CD4-positive, alpha-beta memory T cell (primary cell): ENCODE measurements at regions of chr17 and their contacts with region 1.

Region 1: GRCh38 chr17:40317880-40318829 is 9.2 kb downstream of the RARA start:
- DNase-seq: peak; percentile 89 to 93 (median 91)
- H3K4me3 ChIP-seq: peak overlapping the region; percentile 80 to 91
- H3K4me3 Mint-ChIP-seq: peak overlapping the region; percentile 91 to 98 (median 96)
- H3K27ac ChIP-seq: peak overlapping the region; percentile 99
- H3K27ac Mint-ChIP-seq: peak overlapping the region; percentile 96 to 100 (median 99)
- H3K4me1 ChIP-seq: peaks cover 74% of the 10 kb centered on the region
- H3K4me1 Mint-ChIP-seq: peaks cover 42 to 95% (median 61%) of the 10 kb centered on the region in 4 donors
- H3K27me3 ChIP-seq: no peaks in the 10 kb centered on the region
- H3K27me3 Mint-ChIP-seq: peaks cover 1 to 3% of the 10 kb centered on the region in 2 donors

Region 2: GRCh38 chr17:40287494-40288369 is 30.4 kb before region 1 on chr17 and contains the start of gene CDC6:
- CTCF ChIA-PET with region 1: no interaction called
- POLR2A ChIA-PET with region 1: interaction called, 7 read pairs
- intact Hi-C with region 1: loop called (anchors 2 kb)
- DNase-seq: peak; percentile 97 to 100 (median 98)
- H3K4me3 ChIP-seq: peak within 1 kb of the TSS; percentile 80 to 89
- H3K4me3 Mint-ChIP-seq: peak within 1 kb of the TSS; percentile 97 to 100 (median 99)
- H3K27ac ChIP-seq: peak within 1 kb of the TSS; percentile 42
- H3K27ac Mint-ChIP-seq: peak within 1 kb of the TSS; percentile 82 to 98 (median 94)
- H3K4me1 ChIP-seq: peaks cover 26% of the 10 kb centered on the region
- H3K4me1 Mint-ChIP-seq: peaks cover 17 to 40% (median 27%) of the 10 kb centered on the region in 4 donors
- H3K27me3 ChIP-seq: no peaks in the 10 kb centered on the region
- H3K27me3 Mint-ChIP-seq: no peaks in the 10 kb centered on the region
- total RNA-seq, gene CDC6: 0.72 to 2.1 TPM

Region 3: GRCh38 chr17:40329839-40330794 is 12.0 kb after region 1 on chr17:
- CTCF ChIA-PET with region 1: interaction called, 42 read pairs
- POLR2A ChIA-PET with region 1: interaction called, 1,054 read pairs
- intact Hi-C with region 1: loop called (anchors 1 kb)
- DNase-seq: no peak
- H3K4me3 ChIP-seq: peak overlapping the region; percentile 30 to 38
- H3K4me3 Mint-ChIP-seq: peak overlapping the region in 7 of 8 donors; percentile 22 to 77 (median 60)
- H3K27ac ChIP-seq: peak overlapping the region; percentile 54
- H3K27ac Mint-ChIP-seq: peak overlapping the region; percentile 64 to 100 (median 91)
- H3K4me1 ChIP-seq: peaks cover 98% of the 10 kb centered on the region
- H3K4me1 Mint-ChIP-seq: peaks cover 64 to 98% (median 82%) of the 10 kb centered on the region in 4 donors
- H3K27me3 ChIP-seq: no peaks in the 10 kb centered on the region
- H3K27me3 Mint-ChIP-seq: no peaks in the 10 kb centered on the region

Region 4: DNA sequence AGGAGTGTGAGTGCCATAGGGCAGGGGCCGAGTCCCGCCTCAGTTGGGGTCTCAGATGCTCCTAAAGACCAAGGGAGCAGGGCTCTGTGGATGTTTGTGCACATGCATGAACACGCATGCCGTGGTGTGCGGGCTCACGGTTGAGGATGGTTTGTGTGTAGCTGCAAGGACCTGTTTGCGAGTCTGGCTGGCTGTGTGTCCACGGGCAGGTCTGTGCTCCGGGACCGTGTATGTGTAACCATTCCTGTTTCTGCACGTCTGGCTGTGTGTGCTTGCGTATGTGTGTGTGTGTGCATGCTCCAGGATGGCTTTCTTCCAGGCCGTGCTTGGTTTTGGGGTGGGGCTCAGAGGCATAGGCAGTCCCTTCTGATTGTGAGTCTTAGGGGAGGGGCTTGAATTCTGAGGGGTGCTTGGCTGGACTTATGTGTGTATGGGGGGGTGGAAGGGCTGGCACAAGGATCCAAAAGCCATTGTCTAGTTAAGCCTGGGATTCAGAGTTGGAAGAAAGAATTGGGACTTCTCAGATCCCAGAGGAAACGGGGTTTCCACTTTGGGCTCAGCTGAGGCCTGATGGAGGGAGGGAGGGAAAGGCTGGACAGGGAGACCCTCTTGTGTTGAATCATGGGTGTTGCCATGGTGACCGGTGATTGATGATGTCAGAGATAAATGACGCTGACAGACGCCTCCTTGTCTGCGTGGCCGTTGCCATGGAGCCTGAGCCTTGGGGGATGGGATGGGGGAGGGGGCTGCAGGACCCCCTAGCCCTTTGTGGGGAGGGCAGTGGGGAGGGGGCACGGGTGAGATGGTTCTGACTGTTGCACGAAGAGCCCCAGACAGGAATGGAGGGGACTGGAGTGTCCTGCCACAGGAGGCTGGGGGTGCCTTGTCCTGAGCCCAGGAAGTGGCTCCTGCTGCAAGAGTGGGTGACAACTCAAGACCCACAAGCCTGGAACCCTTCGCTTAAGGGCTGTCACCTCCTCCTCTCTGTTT is 32.1 kb after region 1 on chr17:
- CTCF ChIA-PET with region 1: interaction called, 573 read pairs
- POLR2A ChIA-PET with region 1: interaction called, 1,054 read pairs
- intact Hi-C with region 1: no loop called
- DNase-seq: no peak
- H3K4me3 ChIP-seq: no peak overlapping the region
- H3K4me3 Mint-ChIP-seq: no peak overlapping the region
- H3K27ac ChIP-seq: no peak overlapping the region
- H3K27ac Mint-ChIP-seq: peak overlapping the region in 5 of 7 donors; percentile 46 to 95 (median 87)
- H3K4me1 ChIP-seq: peaks cover 33% of the 10 kb centered on the region
- H3K4me1 Mint-ChIP-seq: peaks cover 20 to 68% (median 37%) of the 10 kb centered on the region in 4 donors
- H3K27me3 ChIP-seq: no peaks in the 10 kb centered on the region
- H3K27me3 Mint-ChIP-seq: no peaks in the 10 kb centered on the region

Region 5: GRCh38 chr17:40371261-40371929 is 53.2 kb after region 1 on chr17:
- CTCF ChIA-PET with region 1: no interaction called
- POLR2A ChIA-PET with region 1: no interaction called
- intact Hi-C with region 1: no loop called
- DNase-seq: peak; percentile 29 to 56 (median 46)
- H3K4me3 ChIP-seq: no peak overlapping the region
- H3K4me3 Mint-ChIP-seq: peak overlapping the region in 1 of 8 donors; percentile 52
- H3K27ac ChIP-seq: no peak overlapping the region
- H3K27ac Mint-ChIP-seq: peak overlapping the region in 3 of 7 donors; percentile 57 to 84 (median 72)
- H3K4me1 ChIP-seq: no peaks in the 10 kb centered on the region
- H3K4me1 Mint-ChIP-seq: peaks cover 2 to 8% (median 5%) of the 10 kb centered on the region in 4 donors
- H3K27me3 ChIP-seq: no peaks in the 10 kb centered on the region
- H3K27me3 Mint-ChIP-seq: peaks cover under 1% of the 10 kb centered on the region in 2 donors

Region 6: DNA sequence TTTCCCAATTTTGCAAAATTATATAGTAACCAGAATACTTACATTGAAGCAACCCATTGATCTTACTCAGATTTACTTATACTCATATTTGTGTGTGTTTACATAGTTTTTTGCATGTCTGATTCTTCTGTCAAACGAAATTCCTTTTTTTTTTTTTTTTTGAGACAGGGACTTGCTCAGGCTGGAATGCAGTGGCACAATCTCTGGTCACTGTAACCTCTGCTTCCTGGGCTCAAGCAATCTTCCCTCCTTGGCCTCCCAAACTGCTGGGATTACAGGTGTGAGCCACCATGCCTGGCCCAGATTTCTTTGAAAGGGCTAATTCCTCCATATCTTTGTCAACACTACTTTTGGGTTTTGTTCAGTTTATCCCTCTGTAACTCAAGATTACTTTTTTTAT is 69.5 kb after region 1 on chr17:
- CTCF ChIA-PET with region 1: no interaction called
- POLR2A ChIA-PET with region 1: no interaction called
- intact Hi-C with region 1: no loop called
- DNase-seq: no peak
- H3K4me3 ChIP-seq: no peak overlapping the region
- H3K4me3 Mint-ChIP-seq: no peak overlapping the region
- H3K27ac ChIP-seq: no peak overlapping the region
- H3K27ac Mint-ChIP-seq: no peak overlapping the region
- H3K4me1 ChIP-seq: no peaks in the 10 kb centered on the region
- H3K4me1 Mint-ChIP-seq: peaks cover 0 to 12% (median under 1%) of the 10 kb centered on the region in 4 donors
- H3K27me3 ChIP-seq: no peaks in the 10 kb centered on the region
- H3K27me3 Mint-ChIP-seq: no peaks in the 10 kb centered on the region

Region 7: GRCh38 chr17:40417609-40418427 is 99.7 kb after region 1 on chr17 and contains the start of gene TOP2A:
- CTCF ChIA-PET with region 1: no interaction called
- POLR2A ChIA-PET with region 1: interaction called, 14 read pairs
- intact Hi-C with region 1: no loop called
- DNase-seq: peak; percentile 98 to 99 (median 98)
- H3K4me3 ChIP-seq: peak within 1 kb of the TSS; percentile 77 to 91
- H3K4me3 Mint-ChIP-seq: peak within 1 kb of the TSS; percentile 90 to 97 (median 95)
- H3K27ac ChIP-seq: peak within 1 kb of the TSS; percentile 49
- H3K27ac Mint-ChIP-seq: peak within 1 kb of the TSS; percentile 69 to 97 (median 93)
- H3K4me1 ChIP-seq: peaks cover 37% of the 10 kb centered on the region
- H3K4me1 Mint-ChIP-seq: peaks cover 15 to 35% (median 28%) of the 10 kb centered on the region in 4 donors
- H3K27me3 ChIP-seq: no peaks in the 10 kb centered on the region
- H3K27me3 Mint-ChIP-seq: no peaks in the 10 kb centered on the region
- total RNA-seq, gene TOP2A: 0.47 to 1.1 TPM

Region 8: GRCh38 chr17:40615295-40615988 is 297.3 kb after region 1 on chr17:
- CTCF ChIA-PET with region 1: interaction called, 3 read pairs
- POLR2A ChIA-PET with region 1: interaction called, 3 read pairs
- intact Hi-C with region 1: loop called (anchors 5 kb)
- DNase-seq: peak in 4 of 5 donors; percentile 53 to 70 (median 56)
- H3K4me3 ChIP-seq: no peak overlapping the region
- H3K4me3 Mint-ChIP-seq: peak overlapping the region; percentile 41 to 83 (median 70)
- H3K27ac ChIP-seq: peak overlapping the region; percentile 66
- H3K27ac Mint-ChIP-seq: peak overlapping the region; percentile 86 to 97 (median 96)
- H3K4me1 ChIP-seq: peaks cover 76% of the 10 kb centered on the region
- H3K4me1 Mint-ChIP-seq: peaks cover 45 to 76% (median 66%) of the 10 kb centered on the region in 4 donors
- H3K27me3 ChIP-seq: no peaks in the 10 kb centered on the region
- H3K27me3 Mint-ChIP-seq: no peaks in the 10 kb centered on the region